HepG2 (cell line): ENCODE measurements at regions of chr14 and their contacts with region 1.

Region 1: DNA sequence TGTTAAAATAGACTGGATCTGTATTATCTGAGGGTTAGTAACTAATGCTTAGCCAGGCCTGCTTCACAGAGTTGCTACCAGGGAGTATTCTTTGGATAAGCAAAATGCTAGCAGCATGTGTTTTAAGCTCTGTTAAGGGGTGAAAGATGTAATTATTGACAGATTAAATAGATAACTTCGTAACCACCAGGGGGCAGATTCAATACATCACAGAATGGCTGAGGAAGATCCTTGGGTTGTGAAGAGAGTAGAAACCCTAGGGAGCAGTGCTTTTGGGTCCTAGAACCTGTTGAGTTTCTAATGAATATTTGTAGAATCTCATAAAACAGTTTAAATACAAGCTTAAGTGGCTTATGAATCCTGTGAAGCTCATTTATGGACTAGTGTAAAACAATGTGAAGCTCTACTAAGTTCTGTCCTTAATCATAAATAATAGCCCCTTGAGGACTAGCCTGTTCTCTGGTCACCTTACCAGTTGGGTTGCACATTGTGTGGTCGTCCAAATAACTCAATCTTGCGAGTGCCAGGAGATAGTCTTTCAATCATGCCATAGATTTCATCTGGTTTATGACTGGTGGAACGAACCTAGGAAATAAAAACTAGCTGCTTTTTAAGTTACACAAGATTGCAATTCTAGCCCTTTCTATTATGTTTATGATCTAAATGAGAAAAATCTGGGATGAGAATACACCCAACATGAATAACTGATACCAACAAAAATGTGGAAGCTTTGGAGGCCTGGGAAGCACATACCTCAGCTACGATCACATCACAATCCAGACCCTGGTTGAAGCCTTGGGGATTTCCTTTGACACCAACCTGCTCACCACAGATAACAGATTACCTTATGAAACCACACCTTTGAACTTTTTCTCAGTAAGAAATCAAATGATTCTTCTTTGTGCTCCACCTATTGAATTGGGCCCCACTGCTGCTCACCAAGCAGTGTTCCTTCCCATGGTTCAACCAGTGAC is 12.3 kb downstream of the METTL3 start:
- DNase-seq: peak; percentile 77
- ATAC-seq: peak; percentile 78
- H3K4me3 ChIP-seq: no peak overlapping the region
- H3K27ac ChIP-seq: peak overlapping the region; percentile 41
- H3K4me1 ChIP-seq: no peaks in the 10 kb centered on the region
- H3K27me3 ChIP-seq: no peaks in the 10 kb centered on the region
- CTCF ChIP-seq: peak; percentile 79
- EP300 ChIP-seq: no peak
- POLR2A ChIP-seq: 0 out of 4 replicates have a peak, but pooled peaks of 1 of the 2 experiments have one; percentile 18
- RAD21 ChIP-seq: peak; percentile 82

Region 2: GRCh38 chr14:21367582-21368144 is 131.2 kb before region 1 on chr14:
- CTCF ChIA-PET with region 1: no interaction called
- POLR2A ChIA-PET with region 1: no interaction called
- in situ Hi-C with region 1: no loop called
- intact Hi-C with region 1: no loop called
- DNase-seq: no peak
- ATAC-seq: no peak
- H3K4me3 ChIP-seq: no peak overlapping the region
- H3K27ac ChIP-seq: no peak overlapping the region
- H3K4me1 ChIP-seq: no peaks in the 10 kb centered on the region
- H3K27me3 ChIP-seq: no peaks in the 10 kb centered on the region
- CTCF ChIP-seq: no peak
- EP300 ChIP-seq: no peak
- POLR2A ChIP-seq: no peak
- RAD21 ChIP-seq: no peak

Region 3: DNA sequence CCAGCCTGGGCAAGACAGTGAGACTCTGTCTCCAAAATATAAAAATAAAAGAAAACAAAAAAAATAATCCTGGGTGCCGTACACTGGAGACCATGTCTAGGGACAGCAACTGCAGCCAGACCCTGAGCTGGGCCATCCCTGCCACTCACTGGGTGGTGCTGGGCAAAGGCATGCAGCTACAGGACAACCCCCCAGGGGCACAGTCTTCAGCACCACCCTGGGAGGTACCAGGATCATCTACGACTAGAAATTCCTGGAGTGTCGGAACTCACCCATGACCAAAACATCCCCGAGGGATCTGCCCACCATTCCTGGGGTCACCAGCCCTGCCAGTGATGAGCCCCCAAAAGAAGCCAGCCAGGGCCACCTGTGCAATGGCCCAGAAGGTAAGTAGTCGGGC is 79.3 kb before region 1 on chr14:
- CTCF ChIA-PET with region 1: no interaction called
- POLR2A ChIA-PET with region 1: no interaction called
- in situ Hi-C with region 1: no loop called
- intact Hi-C with region 1: no loop called
- DNase-seq: no peak
- ATAC-seq: peak; percentile 49
- H3K4me3 ChIP-seq: no peak overlapping the region
- H3K27ac ChIP-seq: no peak overlapping the region
- H3K4me1 ChIP-seq: no peaks in the 10 kb centered on the region
- H3K27me3 ChIP-seq: no peaks in the 10 kb centered on the region
- CTCF ChIP-seq: no peak
- EP300 ChIP-seq: no peak
- POLR2A ChIP-seq: no peak
- RAD21 ChIP-seq: no peak

Region 4: GRCh38 chr14:21431126-21431525 is 67.7 kb before region 1 on chr14:
- CTCF ChIA-PET with region 1: no interaction called
- POLR2A ChIA-PET with region 1: no interaction called
- in situ Hi-C with region 1: no loop called
- intact Hi-C with region 1: no loop called
- DNase-seq: no peak
- ATAC-seq: peak; percentile 31; the same call in 2 of the 3 replicates
- H3K4me3 ChIP-seq: no peak overlapping the region
- H3K27ac ChIP-seq: no peak overlapping the region
- H3K4me1 ChIP-seq: peaks cover 16% of the 10 kb centered on the region
- H3K27me3 ChIP-seq: no peaks in the 10 kb centered on the region
- CTCF ChIP-seq: no peak
- EP300 ChIP-seq: no peak
- POLR2A ChIP-seq: no peak
- RAD21 ChIP-seq: no peak

Region 5: GRCh38 chr14:21510735-21511657 is 12.2 kb after region 1 on chr14 and contains the start of gene METTL3:
- CTCF ChIA-PET with region 1: no interaction called
- POLR2A ChIA-PET with region 1: interaction called, 91 read pairs
- in situ Hi-C with region 1: no loop called
- intact Hi-C with region 1: no loop called
- DNase-seq: peak; percentile 100
- ATAC-seq: peak; percentile 97
- H3K4me3 ChIP-seq: peak within 1 kb of the TSS; percentile 84 to 97 (median 87)
- H3K27ac ChIP-seq: peak within 1 kb of the TSS; percentile 80
- H3K4me1 ChIP-seq: peaks cover 53% of the 10 kb centered on the region
- H3K27me3 ChIP-seq: no peaks in the 10 kb centered on the region; a peak in 1 of 5 replicates
- CTCF ChIP-seq: peak; percentile 53
- EP300 ChIP-seq: 0 out of 4 replicates have a peak, but pooled peaks of 1 of the 2 experiments have one; percentile 1
- POLR2A ChIP-seq: peak; percentile 97
- RAD21 ChIP-seq: peak; percentile 10; the same call in 1 of the 2 replicates
- total RNA-seq, gene METTL3: 114 and 123 TPM in 2 replicates